ENCODE measurements at regions of chr2 and their contacts with region 1.

Region 1: DNA sequence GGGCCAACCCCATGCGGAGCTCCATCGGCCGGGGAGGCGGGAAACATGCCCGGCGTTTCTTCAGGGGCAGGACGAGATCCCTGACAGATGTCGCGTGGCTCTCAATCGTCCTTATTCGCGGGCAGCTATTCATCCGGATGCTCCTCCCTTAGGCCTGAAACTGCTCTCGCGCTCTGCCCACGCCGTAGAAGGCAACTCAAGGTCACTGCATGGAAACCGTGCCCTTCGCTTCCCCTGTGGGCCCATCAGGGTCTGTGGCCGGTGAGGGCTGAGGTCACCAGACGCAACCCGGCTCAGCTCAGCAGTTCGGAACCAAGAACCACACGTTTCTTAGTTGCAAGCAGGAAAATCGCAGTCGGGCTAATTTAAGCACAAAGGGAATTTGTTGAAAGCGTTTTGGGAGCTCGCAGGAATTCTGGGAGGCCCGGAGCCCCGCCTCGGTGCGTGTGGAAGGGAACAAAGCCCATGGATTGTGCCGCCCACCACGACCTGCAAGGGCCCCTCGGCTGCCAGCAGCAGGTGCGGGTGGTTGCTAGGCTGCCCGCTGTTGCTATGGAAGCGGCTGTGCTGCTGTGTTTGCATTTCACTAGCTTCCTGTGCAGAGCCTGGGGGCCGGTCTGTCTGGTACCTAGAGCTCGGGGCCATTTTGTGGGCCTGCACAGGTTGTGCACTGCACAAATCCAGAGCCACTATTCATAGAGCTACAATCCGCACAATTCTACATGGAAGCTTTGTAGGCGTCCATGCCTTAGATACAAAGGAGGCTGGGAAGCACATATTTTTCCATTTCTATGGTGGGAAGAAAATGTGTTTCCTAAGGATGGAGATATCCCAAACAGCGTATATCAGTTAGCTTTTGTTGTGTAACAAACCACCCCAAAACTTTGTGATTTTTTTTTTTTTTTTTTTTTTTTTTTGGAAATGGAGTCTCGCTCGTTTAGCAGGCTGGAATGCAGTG is 6.0 kb upstream of the ALLC start:
- DNase-seq: peak; percentile 38 to 75
- ATAC-seq: peak; percentile 61 to 69 (median 62)
- H3K4me3 ChIP-seq: peak overlapping the region; percentile 20
- H3K4me3 Mint-ChIP-seq: peak overlapping the region; percentile 83
- H3K27ac ChIP-seq: peak overlapping the region; percentile 6
- H3K27ac Mint-ChIP-seq: peak overlapping the region; percentile 76
- H3K4me1 ChIP-seq: peaks cover 15% of the 10 kb centered on the region
- H3K4me1 Mint-ChIP-seq: peaks cover 15 to 16% of the 10 kb centered on the region in 2 donors
- H3K27me3 ChIP-seq: no peaks in the 10 kb centered on the region
- H3K27me3 Mint-ChIP-seq: peaks cover 0 to 11% of the 10 kb centered on the region in 2 donors
- CTCF ChIP-seq: no peak

Region 2: DNA sequence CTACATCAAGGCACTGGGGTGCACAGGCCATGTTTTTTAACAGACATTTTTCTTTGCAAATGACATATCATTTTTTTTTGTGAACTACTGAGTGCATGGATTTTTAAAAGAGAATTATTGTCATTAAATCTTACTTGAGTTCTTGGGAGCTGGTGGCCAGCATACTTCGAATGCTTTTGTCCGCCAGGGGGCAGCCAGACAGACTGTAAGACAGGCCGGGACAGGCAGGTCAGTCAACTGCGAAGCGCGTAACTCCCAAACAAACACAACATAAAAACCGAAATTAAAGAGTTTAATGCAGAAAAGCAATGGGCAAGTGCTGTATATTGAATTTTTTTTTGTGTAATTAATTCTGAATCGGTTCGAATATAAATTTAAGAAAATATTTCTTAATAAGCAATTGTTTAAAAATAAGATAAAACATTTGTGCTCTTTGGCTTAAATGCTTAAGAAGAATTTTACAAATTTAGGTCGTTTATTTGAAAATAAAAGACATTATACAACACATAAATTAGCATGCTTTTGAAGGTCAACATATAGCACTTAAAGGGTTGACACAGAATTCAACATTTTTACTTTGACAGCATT is 1765.5 kb before region 1 on chr2:
- intact Hi-C with region 1: loop called (anchors 5 kb)
- DNase-seq: peak; percentile 23 to 36
- ATAC-seq: peak in 1 of 3 donors; percentile 59
- H3K4me3 ChIP-seq: no peak overlapping the region
- H3K4me3 Mint-ChIP-seq: no peak overlapping the region
- H3K27ac ChIP-seq: no peak overlapping the region
- H3K27ac Mint-ChIP-seq: no peak overlapping the region
- H3K4me1 ChIP-seq: no peaks in the 10 kb centered on the region
- H3K4me1 Mint-ChIP-seq: no peaks in the 10 kb centered on the region
- H3K27me3 ChIP-seq: no peaks in the 10 kb centered on the region
- H3K27me3 Mint-ChIP-seq: peaks cover 15 to 36% of the 10 kb centered on the region in 2 donors
- CTCF ChIP-seq: peak; percentile 69

Region 3: GRCh38 chr2:2112416-2113105 is 1539.4 kb before region 1 on chr2:
- intact Hi-C with region 1: loop called (anchors 10 kb)
- DNase-seq: no peak
- ATAC-seq: no peak
- H3K4me3 ChIP-seq: no peak overlapping the region
- H3K4me3 Mint-ChIP-seq: no peak overlapping the region
- H3K27ac ChIP-seq: no peak overlapping the region
- H3K27ac Mint-ChIP-seq: no peak overlapping the region
- H3K4me1 ChIP-seq: no peaks in the 10 kb centered on the region
- H3K4me1 Mint-ChIP-seq: no peaks in the 10 kb centered on the region
- H3K27me3 ChIP-seq: no peaks in the 10 kb centered on the region
- H3K27me3 Mint-ChIP-seq: peaks cover 19 to 40% of the 10 kb centered on the region in 2 donors
- CTCF ChIP-seq: no peak

Region 4: DNA sequence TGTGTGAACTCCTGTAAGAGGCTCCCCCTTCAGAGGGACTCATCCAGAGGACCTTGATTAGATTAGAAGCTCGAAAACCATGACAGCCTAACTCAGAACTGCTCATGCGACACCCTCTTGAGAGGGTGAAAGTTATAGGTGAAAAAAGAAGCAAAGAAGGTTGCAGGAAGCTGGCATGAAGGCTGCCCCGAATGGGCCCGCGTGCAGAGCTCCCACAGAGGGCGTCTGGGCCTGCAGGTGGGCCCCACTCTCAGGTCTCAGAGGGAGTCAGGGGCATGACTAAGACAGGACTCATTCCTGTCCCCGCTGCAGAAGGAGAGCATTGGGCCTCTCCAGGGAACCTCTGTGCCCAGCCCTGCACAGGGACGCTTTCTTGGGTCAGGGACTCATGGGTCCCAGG is 509.8 kb before region 1 on chr2:
- intact Hi-C with region 1: no loop called
- DNase-seq: no peak
- ATAC-seq: no peak
- H3K4me3 ChIP-seq: no peak overlapping the region
- H3K4me3 Mint-ChIP-seq: no peak overlapping the region
- H3K27ac ChIP-seq: no peak overlapping the region
- H3K27ac Mint-ChIP-seq: no peak overlapping the region
- H3K4me1 ChIP-seq: no peaks in the 10 kb centered on the region
- H3K4me1 Mint-ChIP-seq: peaks cover 11 to 13% of the 10 kb centered on the region in 2 donors
- H3K27me3 ChIP-seq: no peaks in the 10 kb centered on the region
- H3K27me3 Mint-ChIP-seq: no peaks in the 10 kb centered on the region
- CTCF ChIP-seq: no peak

Region 5: GRCh38 chr2:3423492-3424175 is 228.3 kb before region 1 on chr2:
- intact Hi-C with region 1: loop called (anchors 1 kb)
- DNase-seq: peak; percentile 61 to 80
- ATAC-seq: peak; percentile 64 to 75 (median 70)
- H3K4me3 ChIP-seq: no peak overlapping the region
- H3K4me3 Mint-ChIP-seq: no peak overlapping the region
- H3K27ac ChIP-seq: no peak overlapping the region
- H3K27ac Mint-ChIP-seq: peak overlapping the region in 1 of 2 donors; percentile 69
- H3K4me1 ChIP-seq: no peaks in the 10 kb centered on the region
- H3K4me1 Mint-ChIP-seq: peaks cover 8 to 12% of the 10 kb centered on the region in 2 donors
- H3K27me3 ChIP-seq: no peaks in the 10 kb centered on the region
- H3K27me3 Mint-ChIP-seq: no peaks in the 10 kb centered on the region
- CTCF ChIP-seq: peak; percentile 99

Region 6: DNA sequence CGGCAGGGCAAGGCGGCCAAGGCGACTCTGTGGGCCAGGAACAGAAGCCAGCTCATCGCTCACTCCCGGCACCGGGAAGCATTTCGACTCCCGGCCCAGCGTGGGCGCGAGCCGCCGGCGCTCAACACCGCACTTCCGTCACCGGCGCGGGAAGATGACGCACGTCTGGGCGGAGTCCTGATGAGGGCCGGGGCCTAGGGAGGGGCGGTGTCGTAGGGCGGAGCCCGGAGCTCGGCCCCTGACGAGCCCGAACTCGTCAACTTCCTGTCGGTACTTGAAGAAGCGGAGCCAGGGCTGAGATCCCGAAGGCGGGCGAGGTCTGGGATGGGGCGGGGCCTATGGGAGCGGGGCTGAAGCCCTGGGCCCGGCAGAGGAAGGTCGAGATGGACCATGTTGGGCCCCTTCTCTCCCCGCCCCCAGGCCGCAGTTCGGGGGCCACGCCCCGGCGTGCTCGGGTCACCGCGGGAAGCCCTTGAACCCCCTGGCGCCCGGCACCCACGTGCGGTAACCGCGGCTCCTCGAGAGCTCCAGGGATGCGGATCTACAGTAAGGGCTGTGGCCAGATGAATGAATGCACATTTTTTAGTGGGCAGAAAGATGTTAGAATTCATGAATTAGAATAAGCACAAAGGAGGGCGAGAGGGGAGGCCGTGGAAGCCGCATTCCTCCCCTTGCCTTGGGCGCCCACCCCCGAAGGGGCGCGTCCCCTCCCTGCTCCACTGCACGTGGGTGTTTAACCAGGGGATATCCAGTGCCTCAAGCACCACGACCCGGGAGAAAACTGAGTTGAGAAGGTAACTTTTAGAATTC is 93.6 kb before region 1 on chr2 and contains the start of gene RNASEH1:
- intact Hi-C with region 1: loop called (anchors 5 kb)
- DNase-seq: peak; percentile 99 to 100
- ATAC-seq: peak; percentile 95 to 100 (median 95)
- H3K4me3 ChIP-seq: peak within 1 kb of the TSS; percentile 97
- H3K4me3 Mint-ChIP-seq: peak within 1 kb of the TSS; percentile 90
- H3K27ac ChIP-seq: peak within 1 kb of the TSS; percentile 97
- H3K27ac Mint-ChIP-seq: peak within 1 kb of the TSS; percentile 91 to 98
- H3K4me1 ChIP-seq: peaks cover 14% of the 10 kb centered on the region
- H3K4me1 Mint-ChIP-seq: peaks cover 15 to 28% of the 10 kb centered on the region in 2 donors
- H3K27me3 ChIP-seq: no peaks in the 10 kb centered on the region
- H3K27me3 Mint-ChIP-seq: no peaks in the 10 kb centered on the region
- CTCF ChIP-seq: no peak
- total RNA-seq, gene RNASEH1: 25.6 to 30.6 (median 26.3) TPM

Region 7: GRCh38 chr2:3805201-3805939 is 153.4 kb after region 1 on chr2:
- intact Hi-C with region 1: no loop called
- DNase-seq: no peak
- ATAC-seq: no peak
- H3K4me3 ChIP-seq: no peak overlapping the region
- H3K4me3 Mint-ChIP-seq: no peak overlapping the region
- H3K27ac ChIP-seq: no peak overlapping the region
- H3K27ac Mint-ChIP-seq: no peak overlapping the region
- H3K4me1 ChIP-seq: no peaks in the 10 kb centered on the region
- H3K4me1 Mint-ChIP-seq: no peaks in the 10 kb centered on the region
- H3K27me3 ChIP-seq: no peaks in the 10 kb centered on the region
- H3K27me3 Mint-ChIP-seq: peaks cover 0 to 7% of the 10 kb centered on the region in 2 donors
- CTCF ChIP-seq: no peak

Measured in natural killer cell (primary cell).